Endothelial cell of umbilical vein (primary cell): ENCODE measurements at regions of chr19 and their contacts with region 1.

Region 1: DNA sequence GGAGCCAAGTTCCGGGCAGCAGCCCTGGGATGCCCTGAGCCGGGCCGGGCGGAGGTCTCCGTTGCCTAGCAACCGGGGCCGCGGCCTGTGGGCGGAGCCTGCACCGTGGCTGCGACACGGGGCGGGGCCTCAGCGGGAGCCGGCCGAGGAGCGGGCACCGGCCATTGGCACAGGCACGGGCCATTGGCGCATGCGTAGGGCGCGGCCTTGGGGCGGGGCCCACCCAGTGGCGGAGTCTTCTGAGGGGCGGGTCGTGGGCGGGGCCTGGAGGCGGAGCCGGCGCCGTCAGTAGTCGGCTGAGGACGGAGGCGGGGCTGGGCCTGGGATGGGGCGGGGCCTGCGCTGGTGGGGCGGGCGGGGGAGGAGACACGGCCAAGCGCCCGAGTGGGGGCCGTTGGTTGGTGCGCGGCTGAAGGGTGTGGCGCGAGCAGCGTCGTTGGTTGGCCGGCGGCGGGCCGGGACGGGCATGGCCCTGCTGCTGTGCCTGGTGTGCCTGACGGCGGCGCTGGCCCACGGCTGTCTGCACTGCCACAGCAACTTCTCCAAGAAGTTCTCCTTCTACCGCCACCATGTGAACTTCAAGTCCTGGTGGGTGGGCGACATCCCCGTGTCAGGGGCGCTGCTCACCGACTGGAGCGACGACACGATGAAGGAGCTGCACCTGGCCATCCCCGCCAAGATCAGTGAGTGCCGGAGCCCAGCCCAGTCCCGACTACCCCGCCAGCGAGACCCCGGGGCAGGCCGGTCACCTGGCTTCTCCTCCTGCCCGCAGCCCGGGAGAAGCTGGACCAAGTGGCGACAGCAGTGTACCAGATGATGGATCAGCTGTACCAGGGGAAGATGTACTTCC is at the start of gene IZUMO4:
- DNase-seq: peak; percentile 97
- H3K4me3 ChIP-seq: peak within 1 kb of the TSS; percentile 58 to 90 (median 75)
- H3K27ac ChIP-seq: peak within 1 kb of the TSS; percentile 75
- H3K4me1 ChIP-seq: peaks cover 13% of the 10 kb centered on the region
- H3K27me3 ChIP-seq: no peaks in the 10 kb centered on the region
- CTCF ChIP-seq: peak in 1 of 2 donors; percentile 58
- POLR2A ChIP-seq: no peak
- total RNA-seq, gene IZUMO4: 1.1 and 2.0 TPM in 2 replicates

Region 2: GRCh38 chr19:2016041-2016807 is 80.5 kb before region 1 on chr19:
- CTCF ChIA-PET with region 1: interaction called, 6 read pairs
- POLR2A ChIA-PET with region 1: interaction called, 4 read pairs
- dilution Hi-C with region 1: no loop called
- intact Hi-C with region 1: loop called (anchors 1 kb)
- DNase-seq: peak; percentile 42
- H3K4me3 ChIP-seq: peak overlapping the region in 1 of 3 experiments; percentile 22
- H3K27ac ChIP-seq: no peak overlapping the region
- H3K4me1 ChIP-seq: no peaks in the 10 kb centered on the region
- H3K27me3 ChIP-seq: no peaks in the 10 kb centered on the region
- CTCF ChIP-seq: no peak
- POLR2A ChIP-seq: no peak

Region 3: GRCh38 chr19:2027361-2027760 is 69.3 kb before region 1 on chr19:
- CTCF ChIA-PET with region 1: no interaction called
- POLR2A ChIA-PET with region 1: no interaction called
- dilution Hi-C with region 1: no loop called
- intact Hi-C with region 1: no loop called
- DNase-seq: no peak
- H3K4me3 ChIP-seq: no peak overlapping the region
- H3K27ac ChIP-seq: no peak overlapping the region
- H3K4me1 ChIP-seq: peaks cover 12% of the 10 kb centered on the region
- H3K27me3 ChIP-seq: no peaks in the 10 kb centered on the region
- CTCF ChIP-seq: no peak
- POLR2A ChIP-seq: no peak

Region 4: GRCh38 chr19:2084993-2085720 is 11.5 kb before region 1 on chr19:
- CTCF ChIA-PET with region 1: interaction called, 3 read pairs
- POLR2A ChIA-PET with region 1: no interaction called
- dilution Hi-C with region 1: no loop called
- intact Hi-C with region 1: loop called (anchors 1 kb)
- DNase-seq: peak; percentile 34
- H3K4me3 ChIP-seq: no peak overlapping the region
- H3K27ac ChIP-seq: peak overlapping the region; percentile 79
- H3K4me1 ChIP-seq: peaks cover 26% of the 10 kb centered on the region
- H3K27me3 ChIP-seq: no peaks in the 10 kb centered on the region
- CTCF ChIP-seq: no peak
- POLR2A ChIP-seq: peak; percentile 13

Region 5: DNA sequence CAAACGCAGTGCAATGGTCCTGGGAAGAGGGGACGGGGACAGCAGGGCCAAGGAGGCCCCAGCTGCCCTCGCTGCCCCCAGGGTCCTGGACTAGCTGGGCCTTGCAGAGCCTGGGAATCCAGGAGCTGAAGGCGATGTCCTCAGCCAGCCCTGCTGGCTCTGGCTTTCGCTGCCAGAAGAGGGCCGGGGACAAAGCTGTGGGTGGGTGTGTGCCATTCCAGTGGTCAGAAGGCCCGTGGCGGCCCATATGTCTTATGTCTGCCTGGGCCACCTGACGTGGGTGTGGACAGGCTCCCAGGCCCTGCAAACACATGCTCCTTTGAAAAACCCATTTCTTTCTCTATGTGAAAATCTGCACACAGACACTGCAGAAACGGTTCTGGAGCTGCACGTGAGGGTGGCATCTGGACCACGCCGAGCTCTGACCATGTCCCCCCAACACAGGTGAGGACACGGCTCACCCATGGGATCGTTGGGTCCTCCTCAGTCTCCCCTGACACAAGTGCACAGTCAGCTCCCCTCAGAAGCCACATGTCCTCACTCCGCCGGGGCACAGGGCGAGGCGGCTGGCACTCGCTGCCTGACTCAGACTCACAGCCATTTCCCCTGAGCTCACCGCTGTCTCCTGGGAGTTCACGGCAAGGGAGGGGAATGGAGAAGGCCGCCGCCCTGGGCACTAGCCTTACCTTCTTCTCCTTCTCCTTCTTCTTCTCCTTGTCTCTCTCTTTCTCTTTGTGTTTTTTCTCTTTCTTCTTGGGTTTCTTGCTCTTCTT is 16.9 kb after region 1 on chr19:
- CTCF ChIA-PET with region 1: no interaction called
- POLR2A ChIA-PET with region 1: no interaction called
- dilution Hi-C with region 1: no loop called
- intact Hi-C with region 1: no loop called
- DNase-seq: no peak
- H3K4me3 ChIP-seq: no peak overlapping the region
- H3K27ac ChIP-seq: no peak overlapping the region
- H3K4me1 ChIP-seq: no peaks in the 10 kb centered on the region
- H3K27me3 ChIP-seq: no peaks in the 10 kb centered on the region
- CTCF ChIP-seq: no peak
- POLR2A ChIP-seq: no peak

Region 6: DNA sequence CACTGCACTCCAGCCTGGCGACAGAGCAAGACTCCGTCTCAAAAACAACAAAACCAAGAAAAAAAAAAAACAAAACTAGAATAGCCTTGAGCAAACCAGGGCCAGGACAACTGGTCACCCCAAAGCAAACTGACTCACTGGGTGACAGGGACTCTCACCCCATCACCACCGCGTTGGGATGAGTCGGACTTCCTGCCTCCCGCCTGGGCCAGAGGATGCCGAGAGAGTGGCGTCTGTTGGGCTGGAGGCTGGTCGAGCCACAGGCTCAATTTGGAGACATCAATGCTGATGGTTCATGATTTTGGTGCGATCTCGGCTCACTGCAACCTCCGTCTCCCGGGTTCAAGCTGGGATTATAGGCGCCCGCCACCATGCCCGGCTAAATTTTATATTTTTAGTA is 275.0 kb after region 1 on chr19:
- CTCF ChIA-PET with region 1: no interaction called
- POLR2A ChIA-PET with region 1: no interaction called
- dilution Hi-C with region 1: no loop called
- intact Hi-C with region 1: no loop called
- DNase-seq: no peak
- H3K4me3 ChIP-seq: no peak overlapping the region
- H3K27ac ChIP-seq: no peak overlapping the region
- H3K4me1 ChIP-seq: no peaks in the 10 kb centered on the region
- H3K27me3 ChIP-seq: peaks cover 0 to 2% of the 10 kb centered on the region in 2 experiments
- CTCF ChIP-seq: no peak
- POLR2A ChIP-seq: no peak